Aorta (tissue), 5 donors: ENCODE measurements at regions of chr2 and their contacts with region 1.

Region 1: DNA sequence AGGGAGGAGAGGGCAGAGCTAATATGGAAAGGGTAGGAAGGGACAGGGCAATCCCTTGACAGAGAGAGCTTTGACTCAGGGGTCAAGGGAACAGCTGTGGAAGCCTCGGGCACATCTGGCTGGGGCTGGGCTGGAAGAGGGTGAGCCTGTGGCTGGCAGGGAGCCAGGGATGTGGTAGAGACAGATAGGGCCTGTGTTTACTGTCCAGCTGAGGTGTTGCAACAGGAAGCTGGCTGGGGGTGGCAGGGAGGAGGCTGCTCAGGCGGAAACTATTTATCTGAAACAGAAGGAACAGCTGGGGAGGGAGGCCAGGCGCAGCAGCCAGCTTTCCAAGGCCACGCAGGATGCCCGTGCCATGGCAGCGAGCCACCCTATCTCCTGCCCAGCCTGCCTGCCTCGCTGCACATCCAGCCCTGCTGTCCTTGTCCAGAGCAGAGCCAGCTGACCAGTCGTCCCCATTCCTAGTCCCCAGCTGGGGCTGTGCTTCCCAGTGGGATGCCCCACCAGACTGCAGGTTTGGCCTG is 264.7 kb downstream of the CYP26B1 start:
- DNase-seq: peak; percentile 79 to 89
- ATAC-seq: peak; percentile 28
- H3K4me3 ChIP-seq: no peak overlapping the region
- H3K27ac ChIP-seq: no peak overlapping the region
- H3K4me1 ChIP-seq: peaks cover 0 to 5% of the 10 kb centered on the region in 2 donors
- H3K27me3 ChIP-seq: no peaks in the 10 kb centered on the region

Region 2: GRCh38 chr2:71498261-71498701 is 384.7 kb before region 1 on chr2:
- intact Hi-C with region 1: no loop called
- DNase-seq: no peak
- ATAC-seq: no peak
- H3K4me3 ChIP-seq: no peak overlapping the region
- H3K27ac ChIP-seq: peak overlapping the region; percentile 53 to 90
- H3K4me1 ChIP-seq: no peaks in the 10 kb centered on the region
- H3K27me3 ChIP-seq: no peaks in the 10 kb centered on the region

Region 3: GRCh38 chr2:71609958-71610357 is 273.1 kb before region 1 on chr2:
- intact Hi-C with region 1: loop called in 1 of 2 experiments (anchors 10 kb)
- DNase-seq: no peak
- ATAC-seq: no peak
- H3K4me3 ChIP-seq: no peak overlapping the region
- H3K27ac ChIP-seq: no peak overlapping the region
- H3K4me1 ChIP-seq: no peaks in the 10 kb centered on the region
- H3K27me3 ChIP-seq: no peaks in the 10 kb centered on the region

Region 4: GRCh38 chr2:71846669-71847291 is 36.2 kb before region 1 on chr2:
- intact Hi-C with region 1: loop called in 1 of 2 experiments (anchors 5 kb)
- DNase-seq: no peak
- ATAC-seq: no peak
- H3K4me3 ChIP-seq: no peak overlapping the region
- H3K27ac ChIP-seq: no peak overlapping the region
- H3K4me1 ChIP-seq: peaks cover 3 to 5% of the 10 kb centered on the region in 2 donors
- H3K27me3 ChIP-seq: no peaks in the 10 kb centered on the region

Region 5: GRCh38 chr2:72144632-72145288 is 261.7 kb after region 1 on chr2:
- intact Hi-C with region 1: loop called in 1 of 2 experiments (anchors 1 kb)
- DNase-seq: peak; percentile 64 to 82
- ATAC-seq: peak; percentile 44
- H3K4me3 ChIP-seq: peak overlapping the region; percentile 46 to 50
- H3K27ac ChIP-seq: peak overlapping the region in 1 of 2 donors; percentile 14
- H3K4me1 ChIP-seq: no peaks in the 10 kb centered on the region
- H3K27me3 ChIP-seq: no peaks in the 10 kb centered on the region